GM12878 (cell line): ENCODE measurements at regions of chr18 and their contacts with region 1.

Region 1: DNA sequence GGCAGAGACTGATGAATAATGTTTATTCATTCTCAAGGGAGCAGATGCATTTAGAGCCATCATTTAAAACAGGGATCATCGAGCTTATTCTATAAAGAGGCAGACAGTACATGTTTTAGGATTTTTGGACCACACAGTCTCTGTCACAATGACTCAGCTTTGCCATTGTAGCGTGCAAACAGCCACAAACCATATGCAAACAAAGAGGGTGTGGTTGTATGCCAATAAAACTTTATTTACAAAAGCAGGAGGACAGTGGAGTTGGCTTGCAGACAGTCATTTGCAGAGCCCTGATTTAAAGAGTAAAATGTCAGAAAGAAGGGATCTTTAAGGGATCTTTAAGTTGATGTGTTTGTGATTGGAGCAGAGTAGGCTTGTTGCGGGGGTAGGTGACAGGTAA is 51.5 kb downstream of the SMIM21 start:
- DNase-seq: no peak
- ATAC-seq: no peak
- H3K4me3 ChIP-seq: no peak overlapping the region
- H3K27ac ChIP-seq: no peak overlapping the region
- H3K4me1 ChIP-seq: no peaks in the 10 kb centered on the region
- H3K27me3 ChIP-seq: no peaks in the 10 kb centered on the region; a peak in 1 of 4 replicates
- CTCF ChIP-seq: no peak
- EP300 ChIP-seq: no peak
- POLR2A ChIP-seq: no peak
- RAD21 ChIP-seq: no peak

Region 2: GRCh38 chr18:75422341-75422910 is 46.4 kb after region 1 on chr18:
- CTCF ChIA-PET with region 1: no interaction called
- POLR2A ChIA-PET with region 1: no interaction called
- RAD21 ChIA-PET with region 1: no interaction called
- SMC1A ChIA-PET with region 1: no interaction called
- in situ Hi-C with region 1: no loop called
- intact Hi-C with region 1: loop called (anchors 2 kb)
- DNase-seq: no peak
- ATAC-seq: no peak
- H3K4me3 ChIP-seq: no peak overlapping the region
- H3K27ac ChIP-seq: no peak overlapping the region
- H3K4me1 ChIP-seq: no peaks in the 10 kb centered on the region
- H3K27me3 ChIP-seq: no peaks in the 10 kb centered on the region; a peak in 2 of 4 replicates
- CTCF ChIP-seq: no peak
- EP300 ChIP-seq: no peak
- POLR2A ChIP-seq: no peak
- RAD21 ChIP-seq: no peak